GM12878 (cell line): ENCODE measurements at regions of chr18 and their contacts with region 1.

Region 1: GRCh38 chr18:66495844-66496243 is 108.0 kb downstream of the CDH19 start:
- DNase-seq: no peak
- ATAC-seq: peak; percentile 95
- H3K4me3 ChIP-seq: no peak overlapping the region
- H3K27ac ChIP-seq: no peak overlapping the region
- H3K4me1 ChIP-seq: no peaks in the 10 kb centered on the region
- H3K27me3 ChIP-seq: no peaks in the 10 kb centered on the region
- CTCF ChIP-seq: peak; percentile 40 to 67 (median 51); a peak in 4 of 6 replicates
- EP300 ChIP-seq: no peak
- POLR2A ChIP-seq: no peak
- RAD21 ChIP-seq: peak; percentile 60

Region 2: GRCh38 chr18:65725251-65726050 is 770.4 kb before region 1 on chr18:
- CTCF ChIA-PET with region 1: no interaction called
- POLR2A ChIA-PET with region 1: no interaction called
- RAD21 ChIA-PET with region 1: no interaction called
- SMC1A ChIA-PET with region 1: no interaction called
- in situ Hi-C with region 1: no loop called
- intact Hi-C with region 1: loop called (anchors 5 kb)
- DNase-seq: no peak
- ATAC-seq: peak; percentile 78
- H3K4me3 ChIP-seq: no peak overlapping the region
- H3K27ac ChIP-seq: no peak overlapping the region
- H3K4me1 ChIP-seq: no peaks in the 10 kb centered on the region
- H3K27me3 ChIP-seq: no peaks in the 10 kb centered on the region
- CTCF ChIP-seq: peak in 2 of 3 experiments; percentile 51 to 57; a peak in 4 of 6 replicates
- EP300 ChIP-seq: no peak
- POLR2A ChIP-seq: no peak
- RAD21 ChIP-seq: peak; percentile 16; the same call in 1 of the 2 replicates

Region 3: DNA sequence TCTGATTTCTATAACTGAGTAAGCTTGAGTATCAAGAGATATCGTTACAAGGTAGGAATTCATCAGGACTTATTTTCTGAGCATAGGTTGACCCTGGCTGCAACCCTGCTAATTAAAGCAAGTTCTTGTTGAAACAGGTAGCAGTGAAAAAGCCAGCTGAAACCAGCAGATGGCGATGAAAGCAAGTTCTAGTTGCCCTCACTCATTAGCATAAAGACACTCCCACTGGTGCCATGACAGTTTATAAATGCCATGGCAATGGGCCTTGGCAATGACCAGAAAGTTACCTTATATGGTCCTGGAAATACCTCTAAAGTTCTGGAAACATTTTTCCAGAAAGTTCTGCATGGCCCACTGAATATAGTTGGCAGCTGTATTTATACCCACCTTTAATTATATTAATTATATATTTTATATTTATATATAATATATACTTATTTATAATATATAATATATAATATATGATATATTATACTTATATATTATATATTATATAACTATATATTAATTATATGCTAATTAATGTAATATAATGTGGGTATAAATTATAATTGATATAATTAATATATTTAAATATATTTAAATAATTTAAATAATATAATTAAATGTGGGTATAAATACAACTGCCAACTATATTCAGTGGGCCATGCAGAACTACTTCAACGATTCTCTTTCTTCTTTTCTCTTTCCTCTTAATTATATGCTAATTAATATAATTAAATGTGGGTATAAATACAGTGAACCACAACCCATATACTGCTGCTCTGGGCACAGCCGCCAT is 557.1 kb before region 1 on chr18:
- CTCF ChIA-PET with region 1: interaction called, 6 read pairs
- POLR2A ChIA-PET with region 1: no interaction called
- RAD21 ChIA-PET with region 1: no interaction called
- SMC1A ChIA-PET with region 1: no interaction called
- in situ Hi-C with region 1: no loop called
- intact Hi-C with region 1: loop called (anchors 2 kb)
- DNase-seq: peak; percentile 5
- ATAC-seq: peak; percentile 98
- H3K4me3 ChIP-seq: no peak overlapping the region
- H3K27ac ChIP-seq: no peak overlapping the region
- H3K4me1 ChIP-seq: no peaks in the 10 kb centered on the region
- H3K27me3 ChIP-seq: no peaks in the 10 kb centered on the region
- CTCF ChIP-seq: peak in 2 of 3 experiments; percentile 21 to 34; a peak in 3 of 6 replicates
- EP300 ChIP-seq: no peak
- POLR2A ChIP-seq: no peak
- RAD21 ChIP-seq: no peak

Region 4: DNA sequence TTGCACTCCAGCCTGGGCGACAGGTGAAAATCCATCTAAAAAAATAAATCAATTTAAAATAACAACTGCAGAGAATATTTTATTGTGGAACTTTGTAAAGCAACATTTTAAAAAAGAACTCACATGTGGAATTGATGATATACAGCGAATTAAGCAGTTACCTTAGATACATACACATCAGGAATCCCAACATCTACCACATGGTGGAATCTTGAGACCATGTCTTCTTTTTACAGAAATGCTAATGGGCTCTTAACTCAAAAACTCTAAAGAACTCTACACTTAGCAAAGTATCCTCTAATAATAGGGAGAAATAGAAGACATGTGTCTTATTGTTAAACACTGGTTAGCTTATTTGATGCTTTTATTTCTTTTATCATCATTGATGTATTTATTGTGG is 371.4 kb before region 1 on chr18:
- CTCF ChIA-PET with region 1: no interaction called
- POLR2A ChIA-PET with region 1: interaction called, 3 read pairs
- RAD21 ChIA-PET with region 1: no interaction called
- SMC1A ChIA-PET with region 1: interaction called, 5 read pairs
- in situ Hi-C with region 1: no loop called
- intact Hi-C with region 1: loop called (anchors 2 kb)
- DNase-seq: no peak
- ATAC-seq: peak; percentile 73
- H3K4me3 ChIP-seq: no peak overlapping the region
- H3K27ac ChIP-seq: no peak overlapping the region
- H3K4me1 ChIP-seq: no peaks in the 10 kb centered on the region
- H3K27me3 ChIP-seq: no peaks in the 10 kb centered on the region
- CTCF ChIP-seq: peak in 2 of 3 experiments; percentile 34 to 38; a peak in 2 of 6 replicates
- EP300 ChIP-seq: no peak
- POLR2A ChIP-seq: no peak
- RAD21 ChIP-seq: no peak